Mammary epithelial cell (primary cell): ENCODE measurements at regions of chr10 and their contacts with region 1.

Region 1: DNA sequence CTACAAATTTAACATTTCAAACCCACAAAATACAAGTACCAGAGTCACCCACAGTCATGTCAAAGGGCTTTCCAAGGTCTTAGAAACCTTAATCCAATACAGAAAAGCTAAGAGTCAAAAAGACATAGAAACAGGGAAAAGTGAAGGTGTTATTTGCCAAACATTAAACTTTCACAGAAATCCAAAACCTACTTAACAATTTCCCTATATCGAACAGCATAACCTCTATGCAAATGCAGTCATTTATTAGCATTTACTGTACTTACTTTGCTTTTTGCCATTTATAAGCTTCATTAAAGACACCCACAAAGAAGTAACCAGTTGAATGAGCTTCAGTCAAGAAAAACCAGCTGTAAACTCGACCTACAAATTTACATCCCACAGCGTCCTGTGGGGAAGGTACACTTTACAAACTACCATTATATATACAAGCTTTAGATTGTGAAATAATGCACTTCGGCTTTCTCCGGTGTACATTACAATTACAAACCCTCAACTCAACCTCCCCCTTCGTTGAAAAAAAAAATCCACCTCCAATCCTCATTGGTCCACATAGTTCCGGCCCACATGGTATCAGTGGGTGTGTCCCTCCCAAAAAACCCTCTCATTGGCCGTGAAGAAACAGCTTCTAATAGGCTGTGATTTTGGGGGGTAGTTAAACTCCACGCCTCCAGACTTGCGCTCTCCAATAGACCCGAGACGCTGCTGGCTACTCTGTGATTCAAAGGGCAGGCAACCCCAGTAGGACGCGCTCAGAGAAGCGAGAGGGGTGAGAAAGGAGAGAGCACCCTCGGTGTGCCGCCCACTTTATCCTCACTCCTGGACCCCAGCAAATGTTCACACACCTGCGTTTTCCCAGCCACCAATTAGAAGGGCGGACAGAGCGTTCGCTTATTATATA is 1.4 kb downstream of the PANK1 start:
- DNase-seq: peak; percentile 98
- H3K4me3 ChIP-seq: peak overlapping the region; percentile 60 to 79 (median 79)
- H3K27ac ChIP-seq: peak overlapping the region; percentile 48
- H3K4me1 ChIP-seq: peaks cover 18% of the 10 kb centered on the region
- H3K27me3 ChIP-seq: no peaks in the 10 kb centered on the region
- CTCF ChIP-seq: no peak

Region 2: GRCh38 chr10:89466599-89467035 is 177.1 kb before region 1 on chr10:
- CTCF ChIA-PET with region 1: no interaction called
- dilution Hi-C with region 1: no loop called
- in situ Hi-C with region 1: no loop called
- intact Hi-C with region 1: no loop called
- DNase-seq: peak; percentile 80
- H3K4me3 ChIP-seq: no peak overlapping the region
- H3K27ac ChIP-seq: no peak overlapping the region
- H3K4me1 ChIP-seq: peaks cover 40% of the 10 kb centered on the region
- H3K27me3 ChIP-seq: no peaks in the 10 kb centered on the region
- CTCF ChIP-seq: peak; percentile 52 to 53

Region 3: DNA sequence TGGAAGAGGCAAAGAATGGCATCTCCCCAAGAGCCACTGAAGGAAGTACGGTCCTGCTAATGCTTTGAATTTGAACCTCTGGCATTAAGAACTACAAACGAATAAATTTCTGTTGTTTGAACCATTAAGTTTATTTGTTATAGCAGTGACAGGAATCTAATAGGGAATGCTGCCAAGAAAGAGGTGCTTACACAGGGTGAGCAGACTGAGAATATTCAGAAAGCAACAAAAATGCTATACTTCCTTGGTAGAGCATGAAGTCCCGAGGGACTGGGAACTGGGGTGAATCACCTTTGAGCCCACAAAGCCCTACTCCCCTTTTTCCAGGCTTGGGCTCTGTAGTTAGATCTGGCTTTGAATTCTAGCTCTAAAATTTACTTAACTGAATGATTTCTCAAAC is 43.6 kb before region 1 on chr10:
- CTCF ChIA-PET with region 1: no interaction called
- dilution Hi-C with region 1: loop called (anchors 5 kb)
- in situ Hi-C with region 1: no loop called
- intact Hi-C with region 1: no loop called
- DNase-seq: no peak
- H3K4me3 ChIP-seq: no peak overlapping the region
- H3K27ac ChIP-seq: no peak overlapping the region
- H3K4me1 ChIP-seq: no peaks in the 10 kb centered on the region
- H3K27me3 ChIP-seq: no peaks in the 10 kb centered on the region
- CTCF ChIP-seq: no peak

Region 4: GRCh38 chr10:89633484-89633883 is 10.2 kb before region 1 on chr10:
- CTCF ChIA-PET with region 1: no interaction called
- dilution Hi-C with region 1: no loop called
- in situ Hi-C with region 1: no loop called
- intact Hi-C with region 1: loop called (anchors 1 kb)
- DNase-seq: peak; percentile 79
- H3K4me3 ChIP-seq: no peak overlapping the region
- H3K27ac ChIP-seq: no peak overlapping the region
- H3K4me1 ChIP-seq: peaks cover 13% of the 10 kb centered on the region
- H3K27me3 ChIP-seq: no peaks in the 10 kb centered on the region
- CTCF ChIP-seq: no peak

Region 5: GRCh38 chr10:89684604-89685003 is 40.9 kb after region 1 on chr10:
- CTCF ChIA-PET with region 1: no interaction called
- dilution Hi-C with region 1: no loop called
- in situ Hi-C with region 1: no loop called
- intact Hi-C with region 1: no loop called
- DNase-seq: peak; percentile 34
- H3K4me3 ChIP-seq: no peak overlapping the region
- H3K27ac ChIP-seq: no peak overlapping the region
- H3K4me1 ChIP-seq: no peaks in the 10 kb centered on the region
- H3K27me3 ChIP-seq: no peaks in the 10 kb centered on the region
- CTCF ChIP-seq: no peak

Region 6: GRCh38 chr10:89701238-89702120 is 57.8 kb after region 1 on chr10 and contains the start of gene KIF20B:
- CTCF ChIA-PET with region 1: interaction called, 4 read pairs
- dilution Hi-C with region 1: no loop called
- in situ Hi-C with region 1: no loop called
- intact Hi-C with region 1: loop called (anchors 1 kb)
- DNase-seq: peak; percentile 98
- H3K4me3 ChIP-seq: peak within 1 kb of the TSS; percentile 54 to 96 (median 84)
- H3K27ac ChIP-seq: peak within 1 kb of the TSS; percentile 95
- H3K4me1 ChIP-seq: peaks cover 12% of the 10 kb centered on the region
- H3K27me3 ChIP-seq: no peaks in the 10 kb centered on the region
- CTCF ChIP-seq: peak; percentile 10 to 51
- total RNA-seq, gene KIF20B: 3.8 to 29.9 TPM